Breast epithelium (tissue), 4 donors: ENCODE measurements at regions of chr21 and their contacts with region 1.

Region 1: GRCh38 chr21:40433591-40434006 is 413.4 kb downstream of the DSCAM start:
- DNase-seq: no peak
- H3K4me3 ChIP-seq: no peak overlapping the region
- H3K27ac ChIP-seq: no peak overlapping the region
- H3K4me1 ChIP-seq: no peaks in the 10 kb centered on the region
- H3K27me3 ChIP-seq: no peaks in the 10 kb centered on the region
- CTCF ChIP-seq: no peak
- POLR2A ChIP-seq: no peak

Region 2: GRCh38 chr21:40331172-40331571 is 102.4 kb before region 1 on chr21:
- intact Hi-C with region 1: no loop called
- DNase-seq: no peak
- H3K4me3 ChIP-seq: no peak overlapping the region
- H3K27ac ChIP-seq: no peak overlapping the region
- H3K4me1 ChIP-seq: no peaks in the 10 kb centered on the region
- H3K27me3 ChIP-seq: no peaks in the 10 kb centered on the region
- CTCF ChIP-seq: no peak
- POLR2A ChIP-seq: no peak

Region 3: DNA sequence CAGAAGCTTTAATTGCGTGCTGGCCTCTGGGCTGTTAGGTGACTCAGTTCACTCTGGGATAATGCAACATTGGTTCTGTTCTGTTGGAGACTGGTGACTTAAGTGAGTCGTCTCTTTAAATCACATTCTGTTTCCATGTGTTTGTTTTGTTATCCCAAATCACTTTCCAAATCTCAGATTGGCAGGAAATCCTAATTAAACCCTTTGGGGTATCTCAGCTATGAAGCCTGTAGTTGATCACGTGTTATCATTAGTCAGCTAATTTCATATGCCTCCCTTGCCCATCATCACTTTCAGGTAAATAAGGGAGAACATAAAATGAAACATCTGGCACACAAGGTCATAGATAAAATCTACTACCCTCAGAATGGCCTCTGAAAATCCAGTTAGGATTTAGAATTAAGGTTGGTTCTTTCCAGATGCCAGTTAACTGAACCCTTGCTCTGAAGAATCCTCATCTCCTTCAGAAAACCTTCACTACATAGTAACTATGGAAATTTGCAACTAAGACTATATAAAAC is 11.7 kb after region 1 on chr21:
- intact Hi-C with region 1: loop called (anchors 1 kb)
- DNase-seq: no peak
- H3K4me3 ChIP-seq: no peak overlapping the region
- H3K27ac ChIP-seq: no peak overlapping the region
- H3K4me1 ChIP-seq: no peaks in the 10 kb centered on the region
- H3K27me3 ChIP-seq: no peaks in the 10 kb centered on the region
- CTCF ChIP-seq: no peak
- POLR2A ChIP-seq: no peak

Region 4: DNA sequence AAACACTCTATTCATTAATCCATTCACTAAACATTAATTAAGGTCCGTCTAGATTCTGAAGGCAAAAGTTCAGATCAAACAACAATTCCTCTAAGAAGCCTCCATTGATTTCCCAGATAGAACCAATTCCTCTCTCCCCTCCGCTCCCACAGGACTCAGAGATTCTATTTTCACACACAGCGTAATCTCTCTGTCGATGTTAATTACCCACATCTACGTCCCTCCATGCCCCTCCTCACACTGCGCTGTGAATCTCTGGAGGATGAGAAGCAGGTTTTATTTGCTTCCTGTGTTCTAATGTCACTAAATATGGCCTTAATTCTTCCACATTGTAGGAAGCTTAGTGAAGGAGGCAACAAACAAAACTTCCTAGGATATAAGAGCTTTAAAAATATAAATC is 106.6 kb after region 1 on chr21:
- intact Hi-C with region 1: loop called (anchors 5 kb)
- DNase-seq: no peak
- H3K4me3 ChIP-seq: no peak overlapping the region
- H3K27ac ChIP-seq: no peak overlapping the region
- H3K4me1 ChIP-seq: no peaks in the 10 kb centered on the region
- H3K27me3 ChIP-seq: no peaks in the 10 kb centered on the region
- CTCF ChIP-seq: no peak
- POLR2A ChIP-seq: no peak